ENCODE measurements at regions of chr11 and their contacts with region 1.

Region 1: GRCh38 chr11:34357701-34358257 is at the start of gene ABTB2:
- DNase-seq: peak; percentile 97
- ATAC-seq: peak; percentile 76
- H3K4me3 ChIP-seq: peak within 1 kb of the TSS; percentile 86
- H3K27ac ChIP-seq: peak within 1 kb of the TSS; percentile 41
- H3K4me1 ChIP-seq: peaks cover 24% of the 10 kb centered on the region
- H3K27me3 ChIP-seq: no peaks in the 10 kb centered on the region
- CTCF ChIP-seq: no peak
- total RNA-seq, gene ABTB2: 5.2 and 10.0 TPM in 2 replicates

Region 2: DNA sequence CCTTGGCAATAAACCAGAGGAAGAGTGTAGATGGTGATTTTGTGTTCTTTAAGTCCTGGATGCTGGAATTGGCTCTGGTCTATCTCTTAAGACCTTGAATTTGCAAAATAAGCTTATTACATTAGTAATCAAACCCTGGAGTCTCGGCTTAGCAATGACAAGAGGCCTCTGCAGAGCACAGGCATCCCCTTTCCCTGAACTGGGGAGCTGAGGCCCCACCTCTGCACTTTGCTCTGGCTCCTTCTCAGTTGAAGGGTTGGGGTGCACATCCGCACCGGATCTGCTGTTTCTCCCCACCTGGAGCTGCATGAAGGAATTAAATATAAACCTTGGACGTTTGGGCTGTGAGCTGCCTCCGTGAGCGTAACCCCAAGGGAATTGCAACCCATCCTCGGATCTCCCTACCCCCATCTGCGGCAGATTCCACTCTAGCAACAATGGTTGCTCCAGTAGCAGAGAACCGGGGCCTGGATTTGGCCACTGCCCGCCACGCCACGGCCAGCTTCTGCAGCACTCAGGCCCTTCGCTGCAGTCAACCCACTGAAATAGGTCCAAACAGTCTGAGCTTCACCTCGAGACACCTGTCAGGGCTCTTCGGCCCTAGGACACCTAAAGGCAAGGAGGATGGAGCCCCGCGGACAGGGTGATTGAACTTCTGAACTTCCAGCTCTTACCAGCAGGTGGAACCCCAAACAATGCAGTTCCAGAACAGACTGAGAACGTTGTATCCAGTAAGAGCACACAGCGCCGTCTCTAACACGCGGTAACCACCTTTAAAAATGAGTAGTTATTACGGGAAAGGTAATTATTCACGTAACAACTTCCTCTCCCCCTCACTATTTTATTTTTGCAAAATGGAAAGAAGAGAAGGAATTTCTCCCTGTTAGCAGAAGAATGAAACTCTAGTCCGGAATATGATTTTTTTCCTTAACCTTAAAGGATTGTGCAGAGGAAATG is 361.0 kb before region 1 on chr11:
- CTCF ChIA-PET with region 1: no interaction called
- POLR2A ChIA-PET with region 1: no interaction called
- intact Hi-C with region 1: loop called (anchors 2 kb)
- DNase-seq: peak; percentile 86
- ATAC-seq: peak; percentile 99
- H3K4me3 ChIP-seq: peak overlapping the region; percentile 56
- H3K27ac ChIP-seq: no peak overlapping the region
- H3K4me1 ChIP-seq: peaks cover 8% of the 10 kb centered on the region
- H3K27me3 ChIP-seq: no peaks in the 10 kb centered on the region
- CTCF ChIP-seq: peak; percentile 81

Region 3: DNA sequence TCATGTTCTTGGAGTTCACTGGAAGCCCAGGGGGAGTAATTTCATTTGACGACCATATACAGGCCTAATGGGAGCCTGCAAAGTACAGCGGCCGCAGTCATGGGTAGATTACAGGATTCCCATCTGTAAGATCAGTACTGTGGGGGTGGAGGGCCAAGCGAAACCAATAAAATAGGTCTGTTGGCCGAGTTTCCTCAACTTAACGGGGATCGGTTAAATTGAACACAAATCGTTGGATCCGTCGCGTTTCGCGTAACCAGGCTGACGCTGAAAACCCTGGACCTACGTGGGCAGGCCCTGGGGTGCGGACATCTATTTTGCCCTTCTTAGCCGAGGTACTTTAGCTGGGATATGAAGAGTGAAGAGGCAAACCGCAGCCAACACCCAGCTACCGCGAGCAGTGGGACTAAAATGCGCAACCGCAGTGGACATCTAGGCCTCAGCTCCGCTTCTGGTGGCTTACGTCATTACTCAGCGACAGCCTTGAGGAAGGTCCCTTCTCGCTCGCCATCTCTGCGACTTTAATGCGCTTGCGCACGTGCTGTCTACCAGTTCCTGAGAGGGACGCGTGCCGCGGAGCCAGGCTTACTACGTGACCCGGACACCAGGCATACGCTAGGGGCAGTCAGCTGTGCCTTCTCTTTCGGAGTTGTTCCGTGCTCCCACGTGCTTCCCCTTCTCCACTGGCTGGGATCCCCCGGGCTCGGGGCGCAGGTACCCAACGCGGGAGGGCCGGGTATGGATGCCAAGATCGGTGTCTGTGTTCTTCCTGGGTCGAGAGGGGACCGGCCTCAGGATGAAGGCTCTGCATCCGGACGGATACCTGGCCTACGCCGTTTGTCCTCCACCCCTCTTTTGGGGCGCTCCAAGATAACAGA is 252.5 kb before region 1 on chr11 and contains the start of gene NAT10:
- CTCF ChIA-PET with region 1: no interaction called
- POLR2A ChIA-PET with region 1: no interaction called
- intact Hi-C with region 1: loop called (anchors 2 kb)
- DNase-seq: peak; percentile 98
- ATAC-seq: peak; percentile 87
- H3K4me3 ChIP-seq: peak within 1 kb of the TSS; percentile 85
- H3K27ac ChIP-seq: peak within 1 kb of the TSS; percentile 88
- H3K4me1 ChIP-seq: peaks cover 19% of the 10 kb centered on the region
- H3K27me3 ChIP-seq: no peaks in the 10 kb centered on the region
- CTCF ChIP-seq: no peak
- total RNA-seq, gene NAT10: 48.7 and 55.9 TPM in 2 replicates

Region 4: GRCh38 chr11:34192481-34193401 is 165.0 kb before region 1 on chr11:
- CTCF ChIA-PET with region 1: interaction called, 5 read pairs
- POLR2A ChIA-PET with region 1: no interaction called
- intact Hi-C with region 1: loop called (anchors 1 kb)
- DNase-seq: peak; percentile 91
- ATAC-seq: peak; percentile 93
- H3K4me3 ChIP-seq: peak overlapping the region; percentile 1; the same call in 1 of the 2 replicates
- H3K27ac ChIP-seq: peak overlapping the region; percentile 53
- H3K4me1 ChIP-seq: peaks cover 31% of the 10 kb centered on the region
- H3K27me3 ChIP-seq: no peaks in the 10 kb centered on the region
- CTCF ChIP-seq: no peak

Region 5: DNA sequence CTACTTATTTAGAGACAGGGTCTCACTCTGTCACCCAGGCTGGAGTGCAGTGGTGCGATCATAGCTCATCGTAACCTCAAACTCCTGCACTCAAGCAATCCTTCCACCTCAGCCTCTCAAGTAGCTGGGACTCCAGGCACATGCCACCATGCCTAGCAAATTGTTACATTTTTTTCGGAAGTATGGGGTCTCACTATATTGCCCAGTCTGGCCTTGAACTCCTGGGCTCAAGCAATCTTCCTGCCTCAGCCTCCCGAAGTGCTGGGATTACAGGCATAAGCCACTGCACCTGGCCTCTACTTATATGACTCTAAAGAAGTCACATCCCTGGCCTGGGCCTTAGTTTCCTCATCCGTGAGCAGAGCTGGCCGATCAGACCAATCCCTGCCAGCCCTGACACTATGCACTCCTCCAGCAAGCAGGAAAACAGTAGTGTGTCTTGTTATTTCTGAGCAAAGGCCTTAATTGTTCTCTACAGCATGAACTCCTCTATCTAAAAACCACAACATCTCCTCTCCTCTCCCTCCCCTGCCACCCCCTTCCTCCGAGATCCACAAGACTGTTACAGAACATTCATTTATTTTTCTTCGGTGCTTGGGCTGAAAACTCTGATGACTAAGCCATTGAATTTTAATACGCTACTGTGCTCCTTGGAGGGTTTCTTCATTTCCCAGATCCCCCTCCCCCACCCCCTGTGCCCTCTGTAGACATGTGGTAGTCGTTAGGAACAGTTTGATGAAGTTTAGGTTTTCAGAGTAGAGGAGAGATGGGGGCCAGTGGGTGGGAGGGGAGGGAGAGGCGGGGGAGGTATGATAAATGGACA is 91.5 kb before region 1 on chr11:
- CTCF ChIA-PET with region 1: no interaction called
- POLR2A ChIA-PET with region 1: no interaction called
- intact Hi-C with region 1: loop called (anchors 2 kb)
- DNase-seq: peak; percentile 78
- ATAC-seq: peak; percentile 64
- H3K4me3 ChIP-seq: no peak overlapping the region
- H3K27ac ChIP-seq: peak overlapping the region; percentile 70
- H3K4me1 ChIP-seq: peaks cover 46% of the 10 kb centered on the region
- H3K27me3 ChIP-seq: no peaks in the 10 kb centered on the region
- CTCF ChIP-seq: no peak

Region 6: GRCh38 chr11:34331329-34331728 is 26.4 kb before region 1 on chr11:
- CTCF ChIA-PET with region 1: no interaction called
- POLR2A ChIA-PET with region 1: no interaction called
- intact Hi-C with region 1: loop called (anchors 1 kb)
- DNase-seq: peak; percentile 86
- ATAC-seq: peak; percentile 82
- H3K4me3 ChIP-seq: peak overlapping the region; percentile 26; the same call in 1 of the 2 replicates
- H3K27ac ChIP-seq: peak overlapping the region; percentile 80
- H3K4me1 ChIP-seq: peaks cover 50% of the 10 kb centered on the region
- H3K27me3 ChIP-seq: no peaks in the 10 kb centered on the region
- CTCF ChIP-seq: no peak

Region 7: DNA sequence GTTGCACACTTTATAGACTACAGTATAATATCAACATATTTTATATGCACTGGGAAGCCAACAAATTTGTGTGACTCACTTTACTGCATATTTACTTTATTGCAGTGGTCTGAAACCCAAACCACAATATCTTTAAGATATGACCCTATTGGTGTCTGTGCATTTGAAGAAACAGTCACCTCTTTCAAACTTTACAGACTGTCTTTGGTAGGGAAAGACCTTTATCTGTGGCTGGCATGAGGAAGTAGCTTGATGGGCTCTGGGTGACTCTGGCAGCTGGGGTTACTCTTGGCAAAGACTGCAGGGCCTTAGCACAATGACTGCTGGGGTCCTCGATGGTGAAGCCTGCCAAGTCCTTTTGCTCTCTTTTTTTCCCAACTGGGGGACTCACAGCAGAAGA is 21.3 kb after region 1 on chr11:
- CTCF ChIA-PET with region 1: no interaction called
- POLR2A ChIA-PET with region 1: interaction called, 11 read pairs
- intact Hi-C with region 1: no loop called
- DNase-seq: peak; percentile 94
- ATAC-seq: peak; percentile 90
- H3K4me3 ChIP-seq: peak overlapping the region; percentile 34; the same call in 1 of the 2 replicates
- H3K27ac ChIP-seq: peak overlapping the region; percentile 97
- H3K4me1 ChIP-seq: peaks cover 30% of the 10 kb centered on the region
- H3K27me3 ChIP-seq: no peaks in the 10 kb centered on the region
- CTCF ChIP-seq: no peak

Region 8: GRCh38 chr11:34395916-34396550 is 38.3 kb after region 1 on chr11:
- CTCF ChIA-PET with region 1: no interaction called
- POLR2A ChIA-PET with region 1: no interaction called
- intact Hi-C with region 1: no loop called
- DNase-seq: peak; percentile 89
- ATAC-seq: peak; percentile 100
- H3K4me3 ChIP-seq: no peak overlapping the region
- H3K27ac ChIP-seq: peak overlapping the region; percentile 77
- H3K4me1 ChIP-seq: peaks cover 30% of the 10 kb centered on the region
- H3K27me3 ChIP-seq: no peaks in the 10 kb centered on the region
- CTCF ChIP-seq: no peak